ENCODE measurements at regions of chr2 and their contacts with region 1.

Region 1: DNA sequence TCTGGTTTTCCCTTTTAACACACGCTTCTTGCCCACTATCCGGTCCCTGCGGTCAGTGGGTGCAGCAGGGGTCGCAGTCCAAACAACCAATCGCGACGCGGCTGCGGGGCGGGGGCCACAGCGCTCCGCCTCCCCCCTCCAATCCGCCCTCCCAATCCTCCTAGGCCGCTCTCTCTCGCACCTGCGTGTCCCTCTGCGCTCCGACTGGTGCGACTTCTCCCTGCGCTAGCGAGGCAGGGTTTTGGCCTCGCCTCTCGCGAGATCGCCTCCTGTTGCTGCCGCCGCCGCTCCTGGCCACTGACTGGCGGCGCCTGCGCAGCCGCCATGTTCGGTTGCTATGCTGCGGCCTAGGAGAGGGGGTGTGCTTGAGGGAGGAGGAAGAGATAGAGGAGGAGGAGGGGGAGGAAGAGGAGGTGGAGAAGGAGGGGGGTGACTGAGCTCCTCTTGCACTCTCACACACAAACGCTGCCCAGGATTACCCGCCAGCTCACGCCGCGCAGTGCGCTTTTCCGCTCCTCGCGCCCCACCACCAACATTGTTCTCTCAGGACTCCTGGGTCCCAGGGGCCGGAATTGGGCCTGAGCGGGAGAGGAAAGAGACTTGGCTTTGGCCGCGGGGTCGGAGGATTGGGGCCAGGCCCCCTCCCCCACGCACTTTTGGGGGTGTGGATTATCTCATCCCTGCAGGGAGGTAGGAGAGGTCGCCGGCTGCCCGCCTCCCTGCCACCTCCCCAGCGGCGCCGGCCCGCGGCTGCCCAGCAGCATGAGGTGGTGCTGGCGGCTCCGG is at the start of gene PTPN4:
- DNase-seq: peak; percentile 98
- H3K4me3 ChIP-seq: peak within 1 kb of the TSS; percentile 65 to 85 (median 77)
- H3K27ac ChIP-seq: peak within 1 kb of the TSS; percentile 92 to 95 (median 92)
- H3K4me1 ChIP-seq: peaks cover 2 to 40% (median 19%) of the 10 kb centered on the region in 4 donors
- H3K27me3 ChIP-seq: no peaks in the 10 kb centered on the region
- CTCF ChIP-seq: no peak
- EP300 ChIP-seq: peak in 1 of 4 donors; percentile 18
- POLR2A ChIP-seq: peak; percentile 57 to 60
- total RNA-seq, gene PTPN4: 21.7 to 42.9 (median 23.4) TPM

Region 2: GRCh38 chr2:119702918-119703401 is 56.7 kb before region 1 on chr2:
- intact Hi-C with region 1: loop called (anchors 5 kb)
- DNase-seq: peak; percentile 83
- H3K4me3 ChIP-seq: no peak overlapping the region
- H3K27ac ChIP-seq: no peak overlapping the region
- H3K4me1 ChIP-seq: no peaks in the 10 kb centered on the region
- H3K27me3 ChIP-seq: no peaks in the 10 kb centered on the region
- CTCF ChIP-seq: peak; percentile 48 to 97 (median 90)
- EP300 ChIP-seq: no peak
- POLR2A ChIP-seq: no peak

Region 3: DNA sequence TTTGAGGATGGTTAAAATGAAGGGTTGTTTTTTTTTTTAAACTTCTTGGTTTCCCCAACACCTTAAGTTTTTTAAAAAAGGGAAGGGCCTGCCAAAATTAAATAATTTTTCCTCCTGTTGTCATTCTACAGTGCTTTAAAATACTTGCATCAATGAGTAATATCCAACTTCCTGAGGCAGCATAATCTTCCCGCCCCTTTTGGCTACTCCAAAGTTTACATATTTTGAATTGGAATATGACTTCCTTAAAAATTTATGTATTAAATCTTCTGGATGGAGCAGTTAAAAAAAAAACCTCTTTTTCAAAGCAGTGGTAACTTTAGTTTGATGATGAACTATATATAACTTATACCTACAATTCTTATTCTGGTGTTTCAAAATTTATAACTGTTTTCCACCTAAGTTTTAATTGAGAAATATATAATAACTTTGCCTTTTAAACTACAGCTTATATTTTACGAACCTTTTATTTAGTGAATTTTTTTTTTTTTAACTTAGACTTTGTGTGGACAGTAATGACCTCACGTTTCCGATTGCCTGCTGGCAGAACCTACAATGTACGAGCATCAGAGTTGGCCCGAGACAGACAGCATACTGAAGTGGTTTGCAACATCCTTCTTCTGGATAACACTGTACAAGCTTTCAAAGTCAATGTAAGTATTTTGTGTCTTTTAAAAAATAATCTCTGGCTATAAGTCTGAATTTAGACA is 49.9 kb after region 1 on chr2:
- intact Hi-C with region 1: no loop called
- DNase-seq: peak; percentile 72
- H3K4me3 ChIP-seq: no peak overlapping the region
- H3K27ac ChIP-seq: peak overlapping the region in 3 of 4 donors; percentile 9 to 49 (median 43)
- H3K4me1 ChIP-seq: peaks cover 0 to 23% (median 19%) of the 10 kb centered on the region in 4 donors
- H3K27me3 ChIP-seq: no peaks in the 10 kb centered on the region
- CTCF ChIP-seq: no peak
- EP300 ChIP-seq: no peak
- POLR2A ChIP-seq: no peak

Region 4: DNA sequence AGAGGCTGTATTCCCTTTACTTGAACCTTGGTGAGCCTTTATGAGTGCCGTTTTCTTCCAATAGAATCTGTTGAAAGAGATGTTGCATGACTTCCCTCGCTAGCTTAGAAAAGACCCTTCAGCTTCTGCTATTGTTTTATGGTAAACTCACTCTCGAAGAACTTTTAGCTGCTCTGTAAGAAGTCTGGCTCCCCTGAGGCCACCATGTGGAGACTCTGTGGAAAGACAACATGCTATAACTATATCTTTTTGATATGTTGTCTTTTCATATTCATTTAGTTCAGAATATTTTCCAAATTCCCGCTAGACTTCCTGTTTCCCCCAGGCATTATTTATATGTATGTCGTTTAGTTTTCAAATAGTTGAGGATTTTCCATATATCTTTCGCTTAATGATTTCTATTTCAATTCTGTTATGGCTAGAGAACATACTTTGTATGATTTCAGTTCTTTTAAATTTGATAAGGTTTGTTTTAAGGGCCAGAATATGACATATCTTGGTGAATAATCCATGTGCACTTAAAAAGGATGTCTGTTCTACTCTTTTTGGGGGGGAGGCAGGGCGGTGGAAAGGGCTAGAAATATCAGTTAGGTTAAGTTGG is 64.2 kb after region 1 on chr2:
- intact Hi-C with region 1: loop called (anchors 2 kb)
- DNase-seq: no peak
- H3K4me3 ChIP-seq: no peak overlapping the region
- H3K27ac ChIP-seq: no peak overlapping the region
- H3K4me1 ChIP-seq: peaks cover 0 to 8% (median 2%) of the 10 kb centered on the region in 4 donors
- H3K27me3 ChIP-seq: no peaks in the 10 kb centered on the region
- CTCF ChIP-seq: peak in 3 of 4 experiments; percentile 49 to 59 (median 53)
- EP300 ChIP-seq: no peak
- POLR2A ChIP-seq: no peak

Region 5: GRCh38 chr2:120012771-120013596 is 253.3 kb after region 1 on chr2 and contains the start of gene EPB41L5:
- intact Hi-C with region 1: loop called (anchors 2 kb)
- DNase-seq: peak; percentile 94
- H3K4me3 ChIP-seq: peak within 1 kb of the TSS; percentile 75 to 92 (median 88)
- H3K27ac ChIP-seq: peak within 1 kb of the TSS; percentile 85 to 91 (median 90)
- H3K4me1 ChIP-seq: peaks cover 0 to 18% (median 11%) of the 10 kb centered on the region in 4 donors
- H3K27me3 ChIP-seq: no peaks in the 10 kb centered on the region
- CTCF ChIP-seq: no peak
- EP300 ChIP-seq: no peak
- POLR2A ChIP-seq: peak; percentile 44 to 54
- total RNA-seq, gene EPB41L5: 16.3 to 24.3 (median 20.3) TPM

Region 6: GRCh38 chr2:120223034-120223912 is 463.6 kb after region 1 on chr2 and contains the start of gene TMEM185B:
- intact Hi-C with region 1: loop called (anchors 2 kb)
- DNase-seq: peak; percentile 95
- H3K4me3 ChIP-seq: peak within 1 kb of the TSS; percentile 58 to 76 (median 62)
- H3K27ac ChIP-seq: peak within 1 kb of the TSS; percentile 89 to 95 (median 93)
- H3K4me1 ChIP-seq: peaks cover 0 to 39% (median 23%) of the 10 kb centered on the region in 4 donors
- H3K27me3 ChIP-seq: no peaks in the 10 kb centered on the region
- CTCF ChIP-seq: peak in 2 of 4 experiments; percentile 12 to 15
- EP300 ChIP-seq: no peak
- POLR2A ChIP-seq: peak in 1 of 2 donors; percentile 17
- total RNA-seq, gene TMEM185B: 16.8 to 32.1 (median 25.0) TPM